CD4-positive, alpha-beta T cell (primary cell): ENCODE measurements at regions of chr10 and their contacts with region 1.

Region 1: GRCh38 chr10:22988581-22989360 is 60.9 kb downstream of the ARMC3 start:
- DNase-seq: peak; percentile 44 to 87 (median 62)
- ATAC-seq: peak; percentile 81
- H3K4me3 ChIP-seq: no peak overlapping the region
- H3K4me3 Mint-ChIP-seq: no peak overlapping the region
- H3K27ac ChIP-seq: no peak overlapping the region
- H3K27ac Mint-ChIP-seq: no peak overlapping the region
- H3K4me1 ChIP-seq: no peaks in the 10 kb centered on the region
- H3K4me1 Mint-ChIP-seq: peaks cover 13% of the 10 kb centered on the region
- H3K27me3 ChIP-seq: no peaks in the 10 kb centered on the region
- H3K27me3 Mint-ChIP-seq: no peaks in the 10 kb centered on the region
- CTCF ChIP-seq: peak; percentile 95

Region 2: DNA sequence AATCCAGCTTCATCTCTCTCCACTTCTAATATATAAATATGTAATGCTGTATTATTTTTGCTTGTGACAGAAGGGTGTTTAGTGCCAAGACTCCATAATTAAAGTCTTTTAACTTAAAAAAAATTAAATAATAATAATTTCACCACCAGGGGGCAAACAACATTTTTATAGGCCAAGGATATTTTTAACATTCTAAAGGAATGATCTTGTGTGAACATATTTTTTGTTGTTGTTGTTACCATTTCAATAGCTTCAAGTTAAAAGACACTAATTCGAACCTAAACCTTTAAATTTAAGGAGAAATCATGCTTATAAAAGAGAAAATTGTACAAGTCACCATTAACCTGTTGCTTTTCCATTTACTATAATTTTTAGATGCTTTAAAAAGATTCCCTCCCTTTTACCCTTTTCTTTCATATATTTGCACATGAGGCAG is 977.8 kb before region 1 on chr10:
- CTCF ChIA-PET with region 1: interaction called, 10 read pairs
- POLR2A ChIA-PET with region 1: no interaction called
- intact Hi-C with region 1: loop called (anchors 1 to 5 kb)
- DNase-seq: peak in 3 of 14 experiments; percentile 44 to 57 (median 51)
- ATAC-seq: peak; percentile 34
- H3K4me3 ChIP-seq: no peak overlapping the region
- H3K4me3 Mint-ChIP-seq: no peak overlapping the region
- H3K27ac ChIP-seq: no peak overlapping the region
- H3K27ac Mint-ChIP-seq: no peak overlapping the region
- H3K4me1 ChIP-seq: no peaks in the 10 kb centered on the region
- H3K4me1 Mint-ChIP-seq: peaks cover 4% of the 10 kb centered on the region
- H3K27me3 ChIP-seq: no peaks in the 10 kb centered on the region
- H3K27me3 Mint-ChIP-seq: no peaks in the 10 kb centered on the region
- CTCF ChIP-seq: peak; percentile 64

Region 3: GRCh38 chr10:22228943-22229801 is 759.6 kb before region 1 on chr10:
- CTCF ChIA-PET with region 1: no interaction called
- POLR2A ChIA-PET with region 1: no interaction called
- intact Hi-C with region 1: loop called in 1 of 2 experiments (anchors 1 kb)
- DNase-seq: peak; percentile 72 to 93 (median 82)
- ATAC-seq: peak; percentile 77
- H3K4me3 ChIP-seq: peak overlapping the region; percentile 62
- H3K4me3 Mint-ChIP-seq: peak overlapping the region; percentile 92
- H3K27ac ChIP-seq: peak overlapping the region; percentile 25 to 53
- H3K27ac Mint-ChIP-seq: peak overlapping the region; percentile 99
- H3K4me1 ChIP-seq: peaks cover 3% of the 10 kb centered on the region
- H3K4me1 Mint-ChIP-seq: peaks cover 19% of the 10 kb centered on the region
- H3K27me3 ChIP-seq: no peaks in the 10 kb centered on the region
- H3K27me3 Mint-ChIP-seq: peaks cover 11% of the 10 kb centered on the region
- CTCF ChIP-seq: no peak

Region 4: DNA sequence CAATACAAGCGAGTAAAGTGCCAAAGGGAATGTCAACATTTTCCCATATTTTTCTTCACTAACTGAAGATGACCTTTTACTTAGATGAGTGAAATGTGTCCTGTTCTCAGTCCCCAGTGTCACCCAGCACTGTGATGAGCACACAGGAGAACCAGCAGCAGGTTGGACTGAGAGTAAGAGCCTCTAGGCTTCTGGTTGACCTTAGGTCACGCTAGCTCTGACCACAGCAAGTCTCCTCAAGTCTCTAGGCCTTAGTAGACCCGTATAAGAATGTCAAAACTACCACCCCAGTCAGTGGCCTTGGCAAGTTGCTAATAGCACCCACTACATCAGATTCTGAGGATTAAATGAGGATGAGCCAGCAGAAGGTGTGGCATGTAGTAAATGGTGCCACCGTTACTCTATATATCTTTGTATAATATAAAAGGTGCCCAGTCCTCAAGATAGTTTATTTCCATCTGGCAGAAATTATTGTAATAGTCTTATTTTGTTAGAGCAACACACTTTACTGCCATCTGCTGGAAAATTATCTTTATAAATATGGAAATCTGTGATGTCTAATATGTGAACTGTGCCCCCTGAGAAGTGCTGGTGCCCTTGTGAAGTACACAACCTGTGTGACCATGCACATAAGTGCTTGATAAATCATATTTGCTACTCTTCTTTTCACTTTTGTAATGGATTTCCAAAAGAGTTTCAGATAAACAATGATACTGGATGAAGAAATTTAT is 567.8 kb before region 1 on chr10:
- CTCF ChIA-PET with region 1: no interaction called
- POLR2A ChIA-PET with region 1: no interaction called
- intact Hi-C with region 1: loop called in 1 of 2 experiments (anchors 5 kb)
- DNase-seq: peak in 4 of 14 experiments; percentile 14 to 59 (median 56)
- ATAC-seq: peak; percentile 43
- H3K4me3 ChIP-seq: no peak overlapping the region
- H3K4me3 Mint-ChIP-seq: no peak overlapping the region
- H3K27ac ChIP-seq: no peak overlapping the region
- H3K27ac Mint-ChIP-seq: no peak overlapping the region
- H3K4me1 ChIP-seq: no peaks in the 10 kb centered on the region
- H3K4me1 Mint-ChIP-seq: no peaks in the 10 kb centered on the region
- H3K27me3 ChIP-seq: no peaks in the 10 kb centered on the region
- H3K27me3 Mint-ChIP-seq: no peaks in the 10 kb centered on the region
- CTCF ChIP-seq: peak; percentile 52

Region 5: DNA sequence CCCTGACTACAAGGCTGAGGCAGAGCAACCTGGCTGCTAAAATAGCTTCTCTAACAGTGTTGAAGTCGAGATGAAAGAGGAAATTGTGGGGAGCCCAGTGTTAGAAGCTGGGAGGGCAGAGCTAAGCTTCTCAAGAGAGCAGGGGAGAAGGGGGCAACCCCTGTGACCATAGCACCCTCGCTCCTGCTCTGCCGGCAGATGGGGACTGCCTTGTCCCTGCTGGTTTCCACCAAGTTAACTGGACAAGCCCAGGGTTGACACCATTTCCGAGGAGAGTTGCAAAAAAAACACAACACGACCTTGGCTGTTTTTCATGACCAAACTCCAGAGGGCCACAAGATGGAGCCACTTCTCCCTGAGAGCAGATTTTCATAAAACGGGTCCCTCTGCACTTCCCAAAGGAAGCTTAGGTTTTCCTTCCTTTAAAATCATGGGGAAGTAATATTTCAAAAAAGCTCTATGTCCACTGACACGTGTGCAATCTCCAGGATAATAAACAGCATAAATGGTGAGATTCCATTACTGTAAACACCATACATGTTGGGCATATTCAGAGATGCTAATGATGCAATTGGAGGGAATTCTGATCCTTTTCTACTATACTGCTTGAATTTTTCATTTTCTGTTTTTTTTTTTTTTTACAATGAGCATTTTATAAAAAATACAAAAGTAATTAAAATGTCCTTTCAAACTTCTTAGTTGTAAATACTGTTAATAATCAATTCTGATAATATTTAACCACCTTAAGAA is 414.8 kb before region 1 on chr10:
- CTCF ChIA-PET with region 1: interaction called, 11 read pairs
- POLR2A ChIA-PET with region 1: no interaction called
- intact Hi-C with region 1: loop called (anchors 1 kb)
- DNase-seq: peak in 6 of 14 experiments; percentile 8 to 69 (median 50)
- ATAC-seq: peak; percentile 37
- H3K4me3 ChIP-seq: no peak overlapping the region
- H3K4me3 Mint-ChIP-seq: no peak overlapping the region
- H3K27ac ChIP-seq: no peak overlapping the region
- H3K27ac Mint-ChIP-seq: peak overlapping the region; percentile 75
- H3K4me1 ChIP-seq: peaks cover 14% of the 10 kb centered on the region
- H3K4me1 Mint-ChIP-seq: peaks cover 67% of the 10 kb centered on the region
- H3K27me3 ChIP-seq: no peaks in the 10 kb centered on the region
- H3K27me3 Mint-ChIP-seq: no peaks in the 10 kb centered on the region
- CTCF ChIP-seq: peak; percentile 73

Region 6: DNA sequence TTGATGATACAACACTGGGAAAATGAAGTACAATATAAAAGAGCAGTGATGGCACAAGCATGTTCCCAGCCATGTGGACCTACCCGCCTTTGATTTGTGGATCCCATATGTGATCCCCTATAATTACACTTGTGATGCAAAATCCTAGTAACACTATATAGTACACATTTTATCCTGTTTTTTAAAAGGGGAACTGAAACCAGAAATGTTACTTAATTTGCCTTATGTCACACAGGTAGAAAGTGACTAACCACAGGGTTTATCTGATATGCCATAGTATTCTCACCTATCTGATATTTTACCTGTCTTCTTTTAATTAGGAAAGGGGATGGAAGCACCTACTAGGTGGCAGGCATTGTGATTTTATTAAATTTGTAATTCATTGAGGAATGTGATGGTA is 26.0 kb before region 1 on chr10:
- CTCF ChIA-PET with region 1: no interaction called
- POLR2A ChIA-PET with region 1: no interaction called
- intact Hi-C with region 1: no loop called
- DNase-seq: no peak
- ATAC-seq: no peak
- H3K4me3 ChIP-seq: no peak overlapping the region
- H3K4me3 Mint-ChIP-seq: no peak overlapping the region
- H3K27ac ChIP-seq: no peak overlapping the region
- H3K27ac Mint-ChIP-seq: no peak overlapping the region
- H3K4me1 ChIP-seq: no peaks in the 10 kb centered on the region
- H3K4me1 Mint-ChIP-seq: no peaks in the 10 kb centered on the region
- H3K27me3 ChIP-seq: no peaks in the 10 kb centered on the region
- H3K27me3 Mint-ChIP-seq: no peaks in the 10 kb centered on the region
- CTCF ChIP-seq: no peak